GM13976 (cell line): ENCODE measurements at regions of chr4 and their contacts with region 1.

Region 1: GRCh38 chr4:147866532-147867271 is 134.8 kb downstream of the ARHGAP10 start:
- DNase-seq: peak; percentile 79
- CTCF ChIP-seq: peak; percentile 93

Region 2: DNA sequence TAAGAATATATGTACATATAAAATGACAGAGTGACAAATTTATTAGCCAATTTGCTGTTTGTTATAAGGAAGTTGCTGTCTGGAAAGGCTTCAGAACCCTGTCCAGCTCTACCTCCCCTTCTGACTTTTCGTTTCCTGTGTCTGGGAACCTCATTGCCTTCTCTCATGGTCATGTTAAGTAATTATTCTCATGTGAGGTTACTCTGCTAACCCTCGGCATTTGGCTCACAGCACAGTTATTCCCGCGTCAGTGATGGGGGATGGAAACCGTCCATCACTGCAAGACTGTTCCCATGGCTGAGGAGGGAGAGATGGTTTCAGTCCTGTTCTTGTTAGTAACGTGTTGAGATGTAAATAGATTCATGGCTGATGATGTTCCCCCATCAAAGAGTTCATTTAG is 373.9 kb before region 1 on chr4:
- in situ Hi-C with region 1: no loop called
- DNase-seq: no peak
- CTCF ChIP-seq: no peak

Region 3: DNA sequence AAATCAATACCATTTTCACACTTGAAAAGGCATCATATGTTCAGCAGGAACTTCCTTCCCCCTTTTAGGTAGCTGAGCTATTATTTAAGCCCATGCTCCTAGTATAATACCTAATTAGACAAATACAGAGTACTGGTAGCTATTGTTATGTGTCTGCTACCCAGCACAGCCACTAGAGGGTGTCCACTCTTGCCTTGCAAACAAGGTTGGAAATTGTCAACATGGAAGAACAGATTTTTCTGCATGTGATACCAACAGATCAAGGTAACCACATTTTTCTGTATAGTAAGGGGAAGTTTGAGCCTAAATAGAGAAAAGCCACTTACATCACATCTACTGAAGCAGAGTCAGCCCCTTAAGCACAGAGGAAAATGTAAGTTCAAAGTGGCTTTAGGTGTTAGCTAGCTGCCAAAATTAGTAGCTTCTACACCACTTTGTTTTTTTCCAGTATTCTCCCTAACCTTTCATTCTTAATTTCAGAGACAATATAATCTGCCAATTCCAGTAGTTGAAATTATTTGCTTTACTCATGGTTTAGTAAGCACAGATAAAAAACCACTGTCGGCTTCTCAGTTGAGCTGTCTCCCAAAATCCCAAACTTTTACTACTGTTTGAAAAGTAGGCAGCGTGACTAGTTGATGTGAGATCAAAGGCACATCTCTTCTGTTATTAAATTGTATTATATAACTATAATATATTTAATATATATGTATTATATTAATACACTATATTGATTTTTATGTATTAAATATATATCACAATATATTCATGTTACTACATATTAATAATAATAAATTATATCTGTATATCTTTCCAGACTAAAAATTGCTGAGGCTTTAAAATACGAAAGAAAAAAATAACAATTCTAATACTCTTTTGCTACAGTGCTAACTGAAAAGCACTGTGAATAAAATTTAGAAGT is 347.6 kb before region 1 on chr4:
- in situ Hi-C with region 1: loop called (anchors 10 kb)
- DNase-seq: peak; percentile 46
- CTCF ChIP-seq: peak; percentile 77

Region 4: DNA sequence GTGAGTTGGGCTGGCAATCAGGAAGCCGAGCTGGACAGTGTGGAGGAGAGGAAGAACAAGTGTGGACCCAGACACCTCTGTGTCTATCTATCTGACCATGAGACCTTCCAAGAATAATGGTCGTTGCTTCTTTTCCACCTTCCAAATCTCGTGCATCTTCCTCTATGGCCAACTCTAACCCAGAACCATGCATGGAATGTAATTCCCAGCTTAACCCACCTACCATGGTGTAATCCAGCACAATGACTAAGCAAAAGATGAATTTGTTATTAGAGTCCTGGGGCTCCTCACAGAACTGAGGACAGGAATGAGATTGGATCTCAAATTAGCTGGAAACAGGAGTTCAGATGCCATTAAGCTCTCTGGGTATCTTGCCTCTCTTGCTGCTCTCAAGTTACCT is 266.9 kb before region 1 on chr4:
- in situ Hi-C with region 1: loop called (anchors 10 kb)
- DNase-seq: no peak
- CTCF ChIP-seq: no peak

Region 5: GRCh38 chr4:147714575-147715401 is 151.9 kb before region 1 on chr4:
- in situ Hi-C with region 1: loop called (anchors 10 kb)
- DNase-seq: no peak
- CTCF ChIP-seq: no peak